PC-3 (cell line): ENCODE measurements at regions of chr5 and their contacts with region 1.

Region 1: DNA sequence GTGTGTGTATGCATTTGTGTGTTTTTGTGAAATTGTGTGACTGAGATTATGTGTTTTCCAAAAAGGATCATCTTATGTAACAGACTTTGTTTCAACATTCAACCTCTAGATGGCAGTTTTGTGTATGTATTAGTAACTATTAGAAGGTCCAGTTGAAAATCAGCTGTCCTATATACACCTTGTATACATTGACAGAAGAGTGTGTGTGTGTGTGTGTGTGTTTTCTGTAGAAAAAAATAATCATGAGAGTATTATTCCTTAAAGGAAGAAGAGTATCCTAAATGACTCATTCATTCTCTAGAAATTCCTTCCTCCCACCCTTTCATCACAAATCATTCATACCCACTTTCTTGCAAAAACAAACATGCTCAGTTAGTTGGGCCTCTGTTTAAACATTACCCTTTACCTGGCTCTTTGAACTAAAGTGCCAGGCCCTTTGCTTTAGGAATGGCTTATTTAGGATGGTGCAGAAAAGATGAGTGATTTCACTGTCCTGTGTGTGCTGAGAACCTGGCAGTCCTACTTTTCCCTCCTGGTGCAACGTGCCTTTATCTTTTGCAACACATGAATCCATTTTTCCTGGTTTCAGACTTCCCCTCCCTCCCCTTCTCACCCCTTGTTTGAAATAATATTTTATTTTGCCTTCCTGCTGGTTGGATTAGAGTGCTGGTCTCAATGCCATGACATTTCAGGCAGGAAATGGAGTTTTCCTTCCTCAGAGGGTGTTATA is 152.2 kb downstream of the ARHGAP26 start:
- DNase-seq: peak; percentile 64
- ATAC-seq: peak; percentile 64
- H3K4me3 ChIP-seq: no peak overlapping the region
- H3K27ac ChIP-seq: peak overlapping the region; percentile 67
- H3K4me1 ChIP-seq: peaks cover 31% of the 10 kb centered on the region
- H3K27me3 ChIP-seq: no peaks in the 10 kb centered on the region
- CTCF ChIP-seq: peak; percentile 58

Region 2: GRCh38 chr5:142959683-142960657 is 37.6 kb after region 1 on chr5:
- CTCF ChIA-PET with region 1: no interaction called
- POLR2A ChIA-PET with region 1: no interaction called
- intact Hi-C with region 1: loop called (anchors 1 kb)
- DNase-seq: peak; percentile 74
- ATAC-seq: peak; percentile 92
- H3K4me3 ChIP-seq: no peak overlapping the region
- H3K27ac ChIP-seq: peak overlapping the region; percentile 66
- H3K4me1 ChIP-seq: peaks cover 31% of the 10 kb centered on the region
- H3K27me3 ChIP-seq: no peaks in the 10 kb centered on the region
- CTCF ChIP-seq: no peak

Region 3: DNA sequence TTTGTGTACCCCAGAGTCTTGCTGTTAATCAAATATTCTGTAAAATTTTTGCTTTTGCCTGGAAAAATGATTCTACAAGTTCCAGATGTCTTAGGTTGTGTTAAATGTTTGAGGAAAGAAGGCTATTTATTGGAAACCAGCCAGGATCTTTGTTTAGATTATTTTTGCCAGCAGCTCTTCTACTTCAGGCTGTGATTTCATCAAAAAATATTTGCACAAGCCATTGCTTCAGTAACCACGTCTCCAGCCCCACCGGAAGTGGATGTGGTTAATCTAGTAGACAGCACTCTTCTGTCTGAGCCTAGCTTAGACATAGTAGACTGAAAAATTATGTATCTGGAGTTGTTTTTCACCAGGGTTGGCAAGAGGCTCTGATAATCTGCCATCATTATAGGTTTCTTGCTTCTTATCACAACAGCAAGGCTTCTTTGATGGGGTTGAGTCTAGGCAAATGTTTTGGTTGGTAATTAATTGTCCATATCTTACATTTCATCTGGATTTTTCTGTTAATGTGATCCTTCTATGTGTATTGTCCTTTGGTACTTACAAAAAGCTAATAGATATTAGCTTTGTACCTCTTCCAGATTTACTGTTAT is 1265.4 kb after region 1 on chr5:
- CTCF ChIA-PET with region 1: no interaction called
- POLR2A ChIA-PET with region 1: no interaction called
- intact Hi-C with region 1: loop called (anchors 10 kb)
- DNase-seq: peak; percentile 79
- ATAC-seq: peak; percentile 61
- H3K4me3 ChIP-seq: no peak overlapping the region
- H3K27ac ChIP-seq: no peak overlapping the region
- H3K4me1 ChIP-seq: peaks cover 17% of the 10 kb centered on the region
- H3K27me3 ChIP-seq: no peaks in the 10 kb centered on the region
- CTCF ChIP-seq: no peak